MCF 10A (cell line): ENCODE measurements at regions of chr1 and their contacts with region 1.

Region 1: GRCh38 chr1:93000751-93001175 is 39.5 kb upstream of the DIPK1A start:
- DNase-seq: no peak
- H3K4me3 Mint-ChIP-seq: no peak overlapping the region
- H3K27ac Mint-ChIP-seq: no peak overlapping the region
- H3K4me1 Mint-ChIP-seq: no peaks in the 10 kb centered on the region
- H3K27me3 Mint-ChIP-seq: peaks cover 42% of the 10 kb centered on the region
- CTCF ChIP-seq: no peak

Region 2: GRCh38 chr1:92968138-92969032 is 32.4 kb before region 1 on chr1:
- CTCF ChIA-PET with region 1: interaction called, 12 read pairs
- POLR2A ChIA-PET with region 1: no interaction called
- intact Hi-C with region 1: no loop called
- DNase-seq: peak; percentile 45
- H3K4me3 Mint-ChIP-seq: no peak overlapping the region
- H3K27ac Mint-ChIP-seq: no peak overlapping the region
- H3K4me1 Mint-ChIP-seq: no peaks in the 10 kb centered on the region
- H3K27me3 Mint-ChIP-seq: no peaks in the 10 kb centered on the region
- CTCF ChIP-seq: peak; percentile 52